ENCODE measurements at regions of chr4 and their contacts with region 1.

Region 1: GRCh38 chr4:38856524-38857337 is at the start of gene TLR6:
- DNase-seq: peak; percentile 86
- H3K4me3 Mint-ChIP-seq: peak within 1 kb of the TSS; percentile 66
- H3K27ac Mint-ChIP-seq: peak within 1 kb of the TSS; percentile 84
- H3K4me1 Mint-ChIP-seq: peaks cover 35% of the 10 kb centered on the region
- H3K27me3 Mint-ChIP-seq: no peaks in the 10 kb centered on the region
- total RNA-seq, gene TLR6: 3.6 TPM

Region 2: GRCh38 chr4:38034986-38035882 is 821.5 kb before region 1 on chr4:
- CTCF ChIA-PET with region 1: no interaction called
- intact Hi-C with region 1: no loop called
- DNase-seq: peak; percentile 49
- H3K4me3 Mint-ChIP-seq: no peak overlapping the region
- H3K27ac Mint-ChIP-seq: no peak overlapping the region
- H3K4me1 Mint-ChIP-seq: no peaks in the 10 kb centered on the region
- H3K27me3 Mint-ChIP-seq: no peaks in the 10 kb centered on the region

Region 3: GRCh38 chr4:38062088-38062893 is 794.4 kb before region 1 on chr4:
- CTCF ChIA-PET with region 1: interaction called, 4 read pairs
- intact Hi-C with region 1: loop called (anchors 5 kb)
- DNase-seq: peak; percentile 84
- H3K4me3 Mint-ChIP-seq: peak overlapping the region; percentile 79
- H3K27ac Mint-ChIP-seq: peak overlapping the region; percentile 75
- H3K4me1 Mint-ChIP-seq: peaks cover 12% of the 10 kb centered on the region
- H3K27me3 Mint-ChIP-seq: no peaks in the 10 kb centered on the region

Region 4: DNA sequence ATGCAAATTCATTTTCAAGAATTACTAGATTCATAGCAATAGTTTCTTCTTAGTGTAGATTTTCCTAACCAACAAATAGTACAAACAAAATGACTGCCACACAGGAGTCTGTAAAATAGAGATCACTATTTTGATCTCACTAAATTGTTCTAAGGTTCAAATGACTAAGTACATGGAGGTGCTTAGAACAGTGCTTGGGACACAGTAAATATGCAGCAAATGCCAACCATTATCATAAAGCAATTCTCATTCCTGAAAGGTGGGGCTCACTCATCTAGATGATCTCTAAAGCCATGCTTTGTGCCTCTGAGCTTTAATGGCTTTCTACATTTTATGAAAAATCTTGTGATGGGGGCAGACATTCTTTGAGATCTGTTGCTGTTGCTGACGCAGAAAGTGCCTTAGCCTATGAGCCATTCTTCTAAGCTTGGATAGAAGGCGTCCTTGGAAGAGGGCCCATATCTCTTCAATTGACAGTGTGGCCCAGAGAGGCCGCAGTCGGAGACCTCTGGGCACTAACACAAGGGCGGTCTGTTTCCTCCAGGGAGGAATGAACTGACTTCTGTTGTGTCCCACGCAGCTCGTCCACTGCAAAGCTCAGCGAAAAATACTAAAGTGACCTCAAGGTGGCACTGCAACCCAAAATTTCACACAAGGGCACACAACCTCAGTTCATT is 97.5 kb before region 1 on chr4:
- CTCF ChIA-PET with region 1: interaction called, 128 read pairs
- intact Hi-C with region 1: loop called (anchors 1 kb)
- DNase-seq: peak; percentile 82
- H3K4me3 Mint-ChIP-seq: no peak overlapping the region
- H3K27ac Mint-ChIP-seq: no peak overlapping the region
- H3K4me1 Mint-ChIP-seq: peaks cover 18% of the 10 kb centered on the region
- H3K27me3 Mint-ChIP-seq: no peaks in the 10 kb centered on the region

Region 5: DNA sequence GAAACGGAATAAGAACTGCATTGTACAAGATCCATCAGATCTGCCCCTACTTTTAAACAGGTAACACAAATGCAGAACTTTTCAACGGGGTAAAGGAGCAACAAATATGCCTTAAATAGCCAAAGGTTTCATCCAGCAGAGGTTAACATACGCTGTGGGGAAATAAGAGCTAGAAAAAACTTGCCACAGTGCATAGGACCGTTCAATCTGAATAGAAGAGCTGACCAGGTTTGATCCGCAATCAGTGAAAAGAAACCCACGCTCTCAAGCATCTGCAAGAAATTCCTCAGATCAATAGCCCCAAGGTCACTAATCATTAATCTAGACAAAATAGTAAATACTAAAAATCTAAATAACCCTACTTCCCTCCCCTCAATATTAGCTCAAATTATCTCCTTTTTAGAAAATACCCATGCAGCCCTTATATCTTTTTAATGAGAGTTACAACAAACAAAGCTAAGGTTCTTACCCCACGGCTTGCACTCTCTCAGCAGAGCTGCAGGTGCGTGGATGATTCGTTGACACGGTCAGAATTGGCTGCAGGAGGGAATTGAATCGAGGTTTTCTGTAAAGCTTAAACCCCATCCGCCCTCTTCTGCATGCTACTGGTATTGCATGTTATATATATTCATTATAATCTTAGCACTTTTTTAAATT is 74.2 kb before region 1 on chr4 and contains the start of gene TLR10:
- CTCF ChIA-PET with region 1: interaction called, 15 read pairs
- intact Hi-C with region 1: no loop called
- DNase-seq: peak; percentile 57
- H3K4me3 Mint-ChIP-seq: no peak within 1 kb of the TSS
- H3K27ac Mint-ChIP-seq: no peak within 1 kb of the TSS
- H3K4me1 Mint-ChIP-seq: peaks cover 4% of the 10 kb centered on the region
- H3K27me3 Mint-ChIP-seq: no peaks in the 10 kb centered on the region
- total RNA-seq, gene TLR10: 0.12 to 0.17 TPM

Region 6: GRCh38 chr4:38837849-38838248 is 18.9 kb before region 1 on chr4:
- CTCF ChIA-PET with region 1: interaction called, 7 read pairs
- intact Hi-C with region 1: loop called (anchors 1 kb)
- DNase-seq: no peak
- H3K4me3 Mint-ChIP-seq: no peak overlapping the region
- H3K27ac Mint-ChIP-seq: peak overlapping the region; percentile 43
- H3K4me1 Mint-ChIP-seq: peaks cover 23% of the 10 kb centered on the region
- H3K27me3 Mint-ChIP-seq: no peaks in the 10 kb centered on the region

Region 7: DNA sequence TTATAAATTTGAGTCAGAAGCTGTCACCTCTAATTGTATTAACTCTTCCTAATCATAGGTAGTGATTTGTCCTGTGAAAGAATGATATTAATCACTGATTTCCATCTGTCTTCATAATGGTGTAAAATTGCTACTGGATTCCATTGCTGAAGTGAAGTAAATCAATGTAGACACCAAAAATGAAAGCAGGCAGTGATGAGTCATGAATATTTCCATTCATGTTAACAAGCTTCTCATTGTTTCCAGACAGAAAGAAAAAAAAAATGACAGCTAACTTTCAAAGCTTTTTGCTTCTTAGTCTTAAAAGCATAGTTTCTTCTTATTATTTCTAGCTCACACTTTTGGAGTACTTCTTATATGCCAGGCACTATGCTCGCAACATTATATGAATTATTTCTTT is 32.4 kb after region 1 on chr4:
- CTCF ChIA-PET with region 1: interaction called, 24 read pairs
- intact Hi-C with region 1: loop called (anchors 1 kb)
- DNase-seq: no peak
- H3K4me3 Mint-ChIP-seq: peak overlapping the region; percentile 46
- H3K27ac Mint-ChIP-seq: peak overlapping the region; percentile 88
- H3K4me1 Mint-ChIP-seq: peaks cover 23% of the 10 kb centered on the region
- H3K27me3 Mint-ChIP-seq: no peaks in the 10 kb centered on the region